PC-9 (cell line): ENCODE measurements at regions of chr1 and their contacts with region 1.

Region 1: GRCh38 chr1:17569200-17570161 is 30.0 kb downstream of the ARHGEF10L start:
- DNase-seq: peak; percentile 82 to 91
- H3K4me3 ChIP-seq: peak overlapping the region; percentile 43; the same call in 1 of the 2 replicates
- H3K27ac ChIP-seq: peak overlapping the region; percentile 99
- H3K4me1 ChIP-seq: peaks cover 24% of the 10 kb centered on the region
- H3K27me3 ChIP-seq: no peaks in the 10 kb centered on the region
- CTCF ChIP-seq: no peak

Region 2: GRCh38 chr1:17502326-17502778 is 67.1 kb before region 1 on chr1:
- CTCF ChIA-PET with region 1: no interaction called
- POLR2A ChIA-PET with region 1: no interaction called
- intact Hi-C with region 1: loop called (anchors 2 kb)
- DNase-seq: peak; percentile 54 to 79
- H3K4me3 ChIP-seq: no peak overlapping the region
- H3K27ac ChIP-seq: no peak overlapping the region
- H3K4me1 ChIP-seq: 0 out of 2 replicates have a peak, but pooled peaks cover 7% of the 10 kb centered on the region
- H3K27me3 ChIP-seq: no peaks in the 10 kb centered on the region
- CTCF ChIP-seq: peak; percentile 81

Region 3: DNA sequence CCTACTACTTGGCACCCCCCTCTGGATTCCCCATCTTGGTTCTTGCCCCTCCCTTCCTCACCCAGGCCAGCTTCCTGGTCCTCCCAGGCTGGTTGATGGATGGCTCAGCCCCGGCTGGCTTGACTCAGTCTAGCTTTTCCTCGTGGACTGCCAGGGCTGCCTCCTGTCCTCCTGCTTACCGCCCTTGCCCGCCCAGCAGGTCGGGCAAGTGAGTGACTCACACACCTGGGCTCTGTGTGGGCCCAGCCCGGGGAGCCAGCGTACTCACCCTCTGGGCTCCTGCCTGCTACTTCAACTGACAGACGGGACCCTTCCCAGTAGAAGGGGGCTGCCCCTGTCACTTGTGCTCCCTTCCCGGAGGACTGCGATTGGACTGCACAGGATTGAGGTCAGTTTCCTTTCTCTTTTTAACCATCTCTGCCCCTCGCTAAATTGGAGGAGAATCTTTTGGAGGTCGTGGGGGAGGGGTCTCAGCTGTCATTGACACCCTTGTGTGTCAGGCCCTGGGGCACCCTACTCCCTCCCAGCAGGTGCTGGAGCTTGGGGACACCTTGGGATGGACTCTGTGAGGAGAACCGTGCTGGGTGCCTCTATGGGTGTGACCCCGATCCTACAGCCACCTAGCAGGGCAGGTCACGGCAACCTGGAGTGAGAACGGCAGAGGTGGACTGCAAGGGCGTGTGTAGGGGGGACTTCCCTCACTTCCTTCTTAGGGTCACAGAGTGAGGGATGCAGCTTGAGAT is 49.2 kb before region 1 on chr1:
- CTCF ChIA-PET with region 1: no interaction called
- POLR2A ChIA-PET with region 1: interaction called, 19 read pairs
- intact Hi-C with region 1: no loop called
- DNase-seq: peak; percentile 88 to 90
- H3K4me3 ChIP-seq: peak overlapping the region; percentile 54; the same call in 1 of the 2 replicates
- H3K27ac ChIP-seq: peak overlapping the region; percentile 62
- H3K4me1 ChIP-seq: peaks cover 43% of the 10 kb centered on the region
- H3K27me3 ChIP-seq: no peaks in the 10 kb centered on the region
- CTCF ChIP-seq: no peak

Region 4: GRCh38 chr1:17551755-17552234 is 17.7 kb before region 1 on chr1:
- CTCF ChIA-PET with region 1: no interaction called
- POLR2A ChIA-PET with region 1: interaction called, 8 read pairs
- intact Hi-C with region 1: loop called (anchors 1 kb)
- DNase-seq: peak in 1 of 2 experiments; percentile 63
- H3K4me3 ChIP-seq: no peak overlapping the region; the same call in 1 of the 2 replicates
- H3K27ac ChIP-seq: peak overlapping the region; percentile 95
- H3K4me1 ChIP-seq: peaks cover 56% of the 10 kb centered on the region
- H3K27me3 ChIP-seq: no peaks in the 10 kb centered on the region
- CTCF ChIP-seq: no peak

Region 5: GRCh38 chr1:17605582-17606344 is 36.3 kb after region 1 on chr1:
- CTCF ChIA-PET with region 1: no interaction called
- POLR2A ChIA-PET with region 1: no interaction called
- intact Hi-C with region 1: no loop called
- DNase-seq: no peak
- H3K4me3 ChIP-seq: no peak overlapping the region
- H3K27ac ChIP-seq: no peak overlapping the region
- H3K4me1 ChIP-seq: no peaks in the 10 kb centered on the region
- H3K27me3 ChIP-seq: no peaks in the 10 kb centered on the region
- CTCF ChIP-seq: no peak